Left cardiac atrium (tissue), 4 donors: ENCODE measurements at regions of chr7 and their contacts with region 1.

Region 1: DNA sequence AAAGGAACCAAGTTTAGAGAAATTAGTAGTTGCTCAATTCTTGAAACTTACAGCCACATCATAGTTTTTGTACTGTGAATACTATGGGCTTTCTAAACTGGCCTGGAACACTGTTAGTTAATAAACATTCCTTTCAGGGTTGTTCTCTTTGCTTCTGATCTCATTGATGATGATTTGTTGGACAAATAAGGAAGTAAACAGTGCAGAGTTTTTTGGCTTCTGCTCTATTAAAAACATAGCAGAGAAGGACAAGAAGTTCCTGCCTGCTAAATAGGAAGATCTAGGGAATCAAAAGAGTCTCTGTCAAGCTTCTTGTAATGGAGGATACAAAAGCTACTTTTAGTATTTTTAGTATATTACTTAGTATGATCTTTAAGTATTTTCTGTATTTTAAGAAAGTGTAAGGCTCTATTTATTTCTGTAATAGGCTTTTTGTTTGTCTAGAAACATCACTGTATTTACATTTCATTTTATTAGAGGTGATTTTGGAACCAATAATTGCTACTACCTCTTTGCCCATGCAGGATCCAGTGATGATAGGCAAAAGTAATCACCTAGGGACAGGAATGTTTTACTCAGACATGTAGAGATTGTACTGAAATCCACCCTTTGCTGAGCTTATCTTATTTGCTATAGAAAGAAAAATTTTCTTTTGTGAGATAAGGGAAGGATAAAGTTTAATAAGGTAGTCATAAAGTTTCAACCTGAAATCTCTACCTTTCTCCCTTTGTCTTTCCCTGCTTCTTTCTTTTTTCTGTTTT is 73.3 kb downstream of the MKLN1 start:
- DNase-seq: no peak
- ATAC-seq: peak; percentile 48 to 53

Region 2: GRCh38 chr7:131147604-131148003 is 253.4 kb before region 1 on chr7:
- intact Hi-C with region 1: no loop called
- DNase-seq: no peak
- ATAC-seq: peak in 1 of 2 donors; percentile 38

Region 3: DNA sequence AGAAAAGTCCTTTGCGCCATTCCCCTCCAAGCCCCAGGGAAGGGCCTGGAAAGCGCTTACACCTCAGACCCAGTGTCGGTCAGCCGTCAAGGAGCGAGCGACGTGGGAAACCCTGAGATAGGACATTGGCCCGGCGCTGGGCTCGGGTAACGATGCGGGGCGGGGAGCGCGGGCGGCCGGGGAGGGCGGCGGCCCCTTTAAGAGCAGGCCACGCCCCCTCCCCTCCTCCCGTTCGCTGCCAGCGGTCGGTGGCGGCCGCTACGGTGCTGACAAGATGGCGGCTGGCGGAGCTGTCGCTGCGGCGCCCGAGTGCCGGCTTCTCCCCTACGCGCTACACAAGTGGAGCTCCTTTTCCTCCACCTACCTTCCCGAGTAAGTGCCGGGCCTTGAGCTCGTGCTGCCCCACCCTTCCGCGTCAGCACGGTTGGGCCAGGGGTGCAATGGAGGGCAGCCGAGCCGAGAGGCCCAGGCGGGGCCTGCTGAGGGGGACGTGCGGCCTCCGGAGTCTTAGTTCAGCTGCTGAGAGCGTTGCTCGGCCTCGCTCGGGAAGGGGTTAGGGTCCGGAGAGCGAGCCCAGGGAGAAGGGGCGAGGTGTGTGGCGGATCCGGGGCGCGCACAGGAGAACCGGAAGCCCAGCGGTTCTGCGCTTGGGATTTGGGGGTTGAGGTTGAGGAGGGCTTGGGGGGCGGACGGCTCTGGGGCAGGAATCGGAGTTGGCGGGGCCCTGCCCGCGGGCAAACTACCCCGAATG is 73.2 kb before region 1 on chr7 and contains the start of gene MKLN1:
- intact Hi-C with region 1: loop called in 1 of 2 experiments (anchors 10 kb)
- DNase-seq: peak; percentile 96
- ATAC-seq: peak; percentile 99
- total RNA-seq, gene MKLN1: 39.7 to 48.3 TPM